Naive thymus-derived CD4-positive, alpha-beta T cell (primary cell): ENCODE measurements at regions of chr19 and their contacts with region 1.

Region 1: DNA sequence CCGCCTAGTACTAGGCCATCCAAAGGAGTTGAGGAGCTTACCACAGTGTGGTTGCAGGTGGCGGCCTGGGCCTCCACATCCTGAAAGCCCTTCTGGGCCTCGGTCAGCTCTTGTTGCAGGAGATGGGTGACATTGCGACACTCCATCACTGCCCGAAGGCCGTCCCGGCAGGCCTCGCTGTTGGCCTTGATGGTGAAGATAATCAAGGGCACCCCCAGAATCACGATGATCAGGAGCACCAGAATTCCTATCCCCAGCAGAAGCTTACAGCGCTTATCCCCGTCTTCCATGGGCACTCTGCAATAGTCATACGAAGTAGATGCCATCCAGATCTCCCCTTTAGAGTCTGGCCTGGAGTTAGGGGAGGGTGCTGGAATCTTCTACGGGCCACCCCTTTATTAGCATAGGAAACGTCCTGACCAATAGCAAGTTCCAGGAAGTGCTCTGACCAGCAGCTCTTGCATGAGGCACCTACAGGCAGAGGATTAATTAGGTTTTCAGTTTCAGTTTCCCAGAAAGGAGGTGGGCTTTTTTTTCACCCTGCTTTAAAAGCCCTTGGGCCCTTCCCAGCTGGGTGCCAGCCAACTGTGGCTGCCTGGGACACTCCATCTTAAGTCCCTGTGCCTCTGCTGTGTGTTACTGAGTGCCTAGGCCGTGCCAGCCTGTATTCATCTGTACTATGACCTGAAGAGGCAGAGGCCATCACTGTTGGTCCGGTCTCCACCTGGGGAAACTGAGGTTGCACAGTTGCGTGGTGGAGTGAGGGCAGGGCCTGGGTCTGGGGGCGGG is at the start of gene BST2:
- DNase-seq: peak in 6 of 9 donors; percentile 20 to 69 (median 50)
- ATAC-seq: peak; percentile 90
- H3K4me3 ChIP-seq: peak within 1 kb of the TSS; percentile 81
- H3K4me3 Mint-ChIP-seq: peak within 1 kb of the TSS; percentile 80 to 98 (median 95)
- H3K27ac ChIP-seq: peak within 1 kb of the TSS; percentile 83
- H3K27ac Mint-ChIP-seq: peak within 1 kb of the TSS; percentile 81 to 98 (median 88)
- H3K4me1 ChIP-seq: peaks cover 0 to 12% of the 10 kb centered on the region in 2 donors
- H3K4me1 Mint-ChIP-seq: peaks cover 20 to 47% (median 35%) of the 10 kb centered on the region in 7 donors
- H3K27me3 ChIP-seq: no peaks in the 10 kb centered on the region
- H3K27me3 Mint-ChIP-seq: peaks cover 0 to 2% (median 0%) of the 10 kb centered on the region in 5 donors
- total RNA-seq, gene BST2: 29.9 to 221 (median 57.1) TPM

Region 2: GRCh38 chr19:17419621-17420466 is 14.4 kb after region 1 on chr19 and contains the start of gene MVB12A:
- CTCF ChIA-PET with region 1: interaction called, 7 read pairs
- POLR2A ChIA-PET with region 1: interaction called, 33 read pairs
- intact Hi-C with region 1: loop called (anchors 1 kb)
- DNase-seq: peak; percentile 85 to 98 (median 96)
- ATAC-seq: peak; percentile 99
- H3K4me3 ChIP-seq: peak within 1 kb of the TSS; percentile 79
- H3K4me3 Mint-ChIP-seq: peak within 1 kb of the TSS; percentile 87 to 95 (median 91)
- H3K27ac ChIP-seq: peak within 1 kb of the TSS; percentile 70
- H3K27ac Mint-ChIP-seq: peak within 1 kb of the TSS; percentile 73 to 93 (median 89)
- H3K4me1 ChIP-seq: peaks cover 12 to 15% of the 10 kb centered on the region in 2 donors
- H3K4me1 Mint-ChIP-seq: peaks cover 4 to 28% (median 19%) of the 10 kb centered on the region in 7 donors
- H3K27me3 ChIP-seq: no peaks in the 10 kb centered on the region
- H3K27me3 Mint-ChIP-seq: no peaks in the 10 kb centered on the region
- total RNA-seq, gene MVB12A: 19.5 to 45.1 (median 33.3) TPM

Region 3: DNA sequence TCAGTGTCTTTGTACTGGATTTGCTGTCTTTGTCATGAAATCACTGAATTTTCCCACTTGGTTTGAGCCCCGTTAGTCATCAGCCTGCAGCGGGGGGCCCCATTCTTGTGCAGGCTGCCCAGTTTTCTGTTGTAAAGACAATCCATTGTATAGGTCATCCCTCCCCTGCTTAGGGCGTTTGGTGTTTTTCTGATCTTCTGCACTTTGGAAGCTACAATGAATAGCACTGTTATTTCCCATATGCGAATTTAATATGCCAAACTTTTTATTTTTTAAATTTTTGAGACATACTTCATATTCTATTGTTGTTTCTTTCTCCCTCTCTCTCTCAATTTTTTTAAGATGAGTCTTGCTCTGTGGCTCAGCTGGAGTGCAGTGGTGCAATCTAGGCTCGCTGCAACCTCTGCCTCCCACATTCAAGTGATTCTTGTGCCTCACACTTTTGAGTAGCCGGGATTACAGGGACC is 73.9 kb after region 1 on chr19:
- CTCF ChIA-PET with region 1: no interaction called
- POLR2A ChIA-PET with region 1: no interaction called
- intact Hi-C with region 1: no loop called
- DNase-seq: no peak
- ATAC-seq: no peak
- H3K4me3 ChIP-seq: no peak overlapping the region
- H3K4me3 Mint-ChIP-seq: no peak overlapping the region
- H3K27ac ChIP-seq: no peak overlapping the region
- H3K27ac Mint-ChIP-seq: no peak overlapping the region
- H3K4me1 ChIP-seq: no peaks in the 10 kb centered on the region
- H3K4me1 Mint-ChIP-seq: peaks cover 0 to 11% (median 6%) of the 10 kb centered on the region in 7 donors
- H3K27me3 ChIP-seq: no peaks in the 10 kb centered on the region
- H3K27me3 Mint-ChIP-seq: no peaks in the 10 kb centered on the region